Activated B cell treated with CpG ODN at 0.5 μM for 24 hours (primary cell): ENCODE measurements at regions of chr22 and their contacts with region 1.

Region 1: GRCh38 chr22:24325105-24325757 is 54.6 kb downstream of the SPECC1L start:
- DNase-seq: no peak
- ATAC-seq: peak; percentile 88
- H3K4me3 Mint-ChIP-seq: no peak overlapping the region
- H3K27ac Mint-ChIP-seq: no peak overlapping the region
- H3K4me1 Mint-ChIP-seq: peaks cover 21% of the 10 kb centered on the region
- H3K27me3 Mint-ChIP-seq: no peaks in the 10 kb centered on the region
- CTCF ChIP-seq: peak; percentile 41

Region 2: DNA sequence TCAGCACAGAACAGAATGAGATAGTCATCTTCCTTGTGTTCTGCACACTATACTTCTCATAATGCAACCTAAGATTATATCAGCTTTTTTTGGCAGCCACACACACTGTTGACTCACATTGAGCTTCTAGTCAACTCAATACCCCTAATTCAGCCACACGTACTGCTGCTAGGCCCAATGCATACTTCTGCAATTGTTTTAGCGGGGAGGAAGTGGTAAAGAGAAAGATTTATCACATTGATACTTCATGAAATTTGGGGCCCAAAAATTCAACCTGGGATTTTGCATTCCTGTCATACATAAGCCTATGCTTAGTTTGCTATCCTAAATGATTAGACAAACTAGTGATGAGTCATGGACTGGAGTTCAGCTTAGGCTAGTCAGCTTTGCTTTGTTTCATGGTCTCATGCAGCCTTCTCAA is 161.3 kb after region 1 on chr22:
- CTCF ChIA-PET with region 1: no interaction called
- POLR2A ChIA-PET with region 1: no interaction called
- intact Hi-C with region 1: loop called (anchors 1 kb)
- DNase-seq: no peak
- ATAC-seq: no peak
- H3K4me3 Mint-ChIP-seq: no peak overlapping the region
- H3K27ac Mint-ChIP-seq: peak overlapping the region; percentile 9
- H3K4me1 Mint-ChIP-seq: peaks cover 8% of the 10 kb centered on the region
- H3K27me3 Mint-ChIP-seq: peaks cover 2% of the 10 kb centered on the region
- CTCF ChIP-seq: no peak

Region 3: GRCh38 chr22:24758164-24758799 is 433.1 kb after region 1 on chr22:
- CTCF ChIA-PET with region 1: no interaction called
- POLR2A ChIA-PET with region 1: no interaction called
- intact Hi-C with region 1: loop called (anchors 2 kb)
- DNase-seq: no peak
- ATAC-seq: no peak
- H3K4me3 Mint-ChIP-seq: no peak overlapping the region
- H3K27ac Mint-ChIP-seq: no peak overlapping the region
- H3K4me1 Mint-ChIP-seq: no peaks in the 10 kb centered on the region
- H3K27me3 Mint-ChIP-seq: peaks cover 10% of the 10 kb centered on the region
- CTCF ChIP-seq: peak; percentile 92